ENCODE measurements at regions of chr17 and their contacts with region 1.

Region 1: DNA sequence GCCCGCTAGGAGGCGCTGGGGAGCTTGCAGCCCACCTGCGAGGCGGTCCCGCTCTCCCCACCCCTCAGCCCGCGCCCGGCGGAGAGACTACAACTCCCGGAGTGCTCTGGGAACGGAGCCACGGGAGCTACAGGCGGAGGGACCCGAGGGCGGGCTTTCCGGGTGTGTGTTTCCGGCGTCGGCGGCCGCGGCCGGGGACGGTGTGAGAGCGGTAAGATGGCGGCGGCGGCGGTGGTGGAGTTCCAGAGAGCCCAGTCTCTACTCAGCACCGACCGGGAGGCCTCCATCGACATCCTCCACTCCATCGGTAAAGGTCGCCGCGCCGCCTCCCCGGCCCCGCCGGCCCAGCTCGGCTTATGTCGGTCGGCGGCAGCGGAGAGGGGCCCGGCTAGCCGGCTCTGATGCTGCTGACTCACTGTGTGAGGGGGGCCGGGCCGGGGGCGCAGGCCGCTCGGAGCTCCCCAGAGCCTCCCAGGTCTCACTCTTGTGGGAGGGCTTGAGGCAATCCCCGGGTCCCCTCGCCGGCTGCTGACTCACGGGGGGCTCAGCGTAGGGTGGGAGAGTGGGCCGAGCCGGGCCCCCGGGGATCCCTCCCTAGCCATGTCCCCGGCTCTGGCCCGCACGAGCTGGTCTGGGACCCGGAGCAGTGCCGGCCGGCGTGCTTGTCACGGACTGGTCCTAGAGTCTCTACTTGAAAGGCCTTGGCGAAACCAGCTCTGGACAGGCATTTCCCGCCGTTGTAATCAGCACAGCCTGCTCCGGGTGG is at the start of gene PSMD11:
- DNase-seq: peak; percentile 99
- H3K4me3 Mint-ChIP-seq: peak within 1 kb of the TSS; percentile 90
- H3K27ac Mint-ChIP-seq: peak within 1 kb of the TSS; percentile 83
- H3K4me1 Mint-ChIP-seq: peaks cover 39% of the 10 kb centered on the region
- H3K27me3 Mint-ChIP-seq: peaks cover 14% of the 10 kb centered on the region
- total RNA-seq, gene PSMD11: 78.8 to 90.7 TPM

Region 2: DNA sequence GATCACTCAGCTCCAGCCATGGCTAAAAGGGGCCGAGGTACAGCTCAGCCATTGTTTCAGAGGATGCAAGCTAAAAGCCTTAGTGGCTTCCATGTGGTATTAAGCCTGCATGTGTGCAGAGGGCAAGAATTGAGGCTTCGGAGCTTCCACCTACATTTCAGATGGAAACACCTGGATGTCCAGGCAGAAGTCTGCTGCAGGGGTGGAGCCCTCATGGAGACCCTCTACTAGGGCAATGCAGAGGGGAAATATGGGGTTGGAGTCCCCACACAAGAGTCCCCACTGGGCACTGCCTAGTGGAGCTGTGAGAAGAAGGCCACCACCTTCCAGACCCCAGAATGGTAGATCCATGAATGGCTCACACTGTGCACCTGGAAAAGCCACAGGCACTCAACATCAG is 14.9 kb before region 1 on chr17:
- CTCF ChIA-PET with region 1: interaction called, 55 read pairs
- POLR2A ChIA-PET with region 1: no interaction called
- DNase-seq: no peak
- H3K4me3 Mint-ChIP-seq: no peak overlapping the region
- H3K27ac Mint-ChIP-seq: no peak overlapping the region
- H3K4me1 Mint-ChIP-seq: no peaks in the 10 kb centered on the region
- H3K27me3 Mint-ChIP-seq: peaks cover 2% of the 10 kb centered on the region

Region 3: GRCh38 chr17:32486111-32486700 is 41.7 kb after region 1 on chr17:
- CTCF ChIA-PET with region 1: interaction called, 22 read pairs
- POLR2A ChIA-PET with region 1: no interaction called
- DNase-seq: peak; percentile 67
- H3K4me3 Mint-ChIP-seq: peak overlapping the region; percentile 69
- H3K27ac Mint-ChIP-seq: peak overlapping the region; percentile 81
- H3K4me1 Mint-ChIP-seq: peaks cover 41% of the 10 kb centered on the region
- H3K27me3 Mint-ChIP-seq: no peaks in the 10 kb centered on the region

Region 4: DNA sequence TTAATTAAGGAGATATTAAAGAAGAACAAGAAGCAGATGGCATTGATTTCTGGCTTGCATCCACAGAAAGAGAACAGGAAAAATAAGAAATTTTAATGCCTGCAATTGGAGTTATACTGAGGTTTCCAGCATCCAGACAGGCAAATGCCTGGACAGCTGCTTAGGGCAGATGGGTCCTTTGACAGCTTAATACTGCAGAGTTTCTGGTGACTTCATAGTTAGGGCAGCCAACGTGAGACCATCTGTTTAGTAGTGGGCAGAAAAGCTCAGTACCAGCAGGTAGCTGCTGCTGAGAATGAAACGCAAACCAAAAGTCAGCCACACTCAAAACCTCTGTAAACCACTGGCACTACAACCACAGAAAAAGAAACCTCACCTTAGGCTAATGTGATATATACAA is 152.1 kb after region 1 on chr17:
- CTCF ChIA-PET with region 1: no interaction called
- POLR2A ChIA-PET with region 1: no interaction called
- DNase-seq: peak; percentile 24
- H3K4me3 Mint-ChIP-seq: no peak overlapping the region
- H3K27ac Mint-ChIP-seq: no peak overlapping the region
- H3K4me1 Mint-ChIP-seq: peaks cover 13% of the 10 kb centered on the region
- H3K27me3 Mint-ChIP-seq: no peaks in the 10 kb centered on the region

Measured in activated CD4-positive, alpha-beta T cell treated with anti-CD3 and anti-CD28 coated beads, Interleukin-2, amount 10 ng/mL, durations not matched to agents 7 days and 5 days (primary cell).